ENCODE measurements at regions of chr2 and their contacts with region 1.

Region 1: GRCh38 chr2:3839476-3839875 is 136.1 kb downstream of the DCDC2C start:
- DNase-seq: no peak
- H3K4me3 ChIP-seq: no peak overlapping the region
- H3K27ac ChIP-seq: no peak overlapping the region
- H3K4me1 ChIP-seq: no peaks in the 10 kb centered on the region
- H3K27me3 ChIP-seq: no peaks in the 10 kb centered on the region
- CTCF ChIP-seq: no peak
- POLR2A ChIP-seq: no peak

Region 2: GRCh38 chr2:5482929-5483331 is 1643.5 kb after region 1 on chr2:
- intact Hi-C with region 1: loop called (anchors 10 kb)
- DNase-seq: no peak
- H3K4me3 ChIP-seq: no peak overlapping the region
- H3K27ac ChIP-seq: no peak overlapping the region
- H3K4me1 ChIP-seq: no peaks in the 10 kb centered on the region
- H3K27me3 ChIP-seq: no peaks in the 10 kb centered on the region
- CTCF ChIP-seq: no peak
- POLR2A ChIP-seq: no peak

Measured in breast epithelium (tissue), 4 donors.